A673 (cell line): ENCODE measurements at regions of chr11 and their contacts with region 1.

Region 1: GRCh38 chr11:101835506-101836063 is 79.2 kb upstream of the CEP126 start:
- DNase-seq: no peak
- H3K4me3 ChIP-seq: no peak overlapping the region
- H3K27ac ChIP-seq: no peak overlapping the region
- H3K4me1 ChIP-seq: no peaks in the 10 kb centered on the region
- H3K27me3 ChIP-seq: no peaks in the 10 kb centered on the region
- CTCF ChIP-seq: no peak

Region 2: GRCh38 chr11:101456812-101457211 is 378.8 kb before region 1 on chr11:
- CTCF ChIA-PET with region 1: interaction called, 3 read pairs
- POLR2A ChIA-PET with region 1: no interaction called
- intact Hi-C with region 1: loop called (anchors 5 kb)
- DNase-seq: peak; percentile 37
- H3K4me3 ChIP-seq: no peak overlapping the region
- H3K27ac ChIP-seq: no peak overlapping the region
- H3K4me1 ChIP-seq: no peaks in the 10 kb centered on the region
- H3K27me3 ChIP-seq: no peaks in the 10 kb centered on the region
- CTCF ChIP-seq: peak; percentile 58; the same call in 1 of the 2 replicates

Region 3: DNA sequence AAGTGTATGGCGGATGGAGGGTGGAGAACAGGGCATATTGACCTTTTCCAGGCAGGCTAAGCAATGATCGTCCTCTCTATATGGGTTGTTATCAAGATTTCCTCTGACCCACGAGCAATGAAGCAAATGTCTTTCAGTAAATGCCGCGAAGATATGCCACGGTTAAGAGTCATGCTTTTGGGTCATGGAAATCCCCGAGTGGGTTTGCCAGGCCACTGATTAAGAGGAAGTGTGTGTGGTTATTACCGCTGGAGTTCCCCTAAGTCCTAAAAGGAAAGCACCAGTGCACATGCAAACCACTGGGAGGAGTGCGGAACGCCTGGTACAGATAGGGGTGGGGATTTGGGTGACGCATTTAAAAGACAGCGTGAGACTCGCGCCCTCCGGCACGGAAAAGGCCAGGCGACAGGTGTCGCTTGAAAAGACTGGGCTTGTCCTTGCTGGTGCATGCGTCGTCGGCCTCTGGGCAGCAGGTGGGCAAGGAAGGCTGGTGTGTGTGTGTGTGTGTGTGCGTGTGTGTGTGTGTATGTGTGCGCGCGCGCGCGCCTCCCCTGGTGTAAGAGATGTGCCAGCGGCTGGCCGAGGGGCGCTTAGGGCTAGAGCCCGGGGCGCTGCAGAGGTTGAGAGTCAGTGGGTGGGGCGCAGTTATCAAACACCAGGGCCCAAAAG is 481.6 kb after region 1 on chr11 and contains the start of gene BIRC3:
- CTCF ChIA-PET with region 1: no interaction called
- POLR2A ChIA-PET with region 1: no interaction called
- intact Hi-C with region 1: no loop called
- DNase-seq: peak; percentile 89
- H3K4me3 ChIP-seq: peak within 1 kb of the TSS; percentile 56
- H3K27ac ChIP-seq: no peak within 1 kb of the TSS
- H3K4me1 ChIP-seq: peaks cover 17% of the 10 kb centered on the region
- H3K27me3 ChIP-seq: no peaks in the 10 kb centered on the region
- CTCF ChIP-seq: peak; percentile 47; the same call in 1 of the 2 replicates
- total RNA-seq, gene BIRC3: 2.5 and 2.8 TPM in 2 replicates